ENCODE measurements at regions of chr1 and their contacts with region 1.

Region 1: GRCh38 chr1:217605068-217605789 is 25.7 kb downstream of the GPATCH2 start:
- DNase-seq: no peak
- ATAC-seq: no peak
- H3K4me3 ChIP-seq: no peak overlapping the region
- H3K27ac ChIP-seq: no peak overlapping the region
- H3K4me1 ChIP-seq: no peaks in the 10 kb centered on the region
- H3K27me3 ChIP-seq: no peaks in the 10 kb centered on the region
- CTCF ChIP-seq: no peak

Region 2: DNA sequence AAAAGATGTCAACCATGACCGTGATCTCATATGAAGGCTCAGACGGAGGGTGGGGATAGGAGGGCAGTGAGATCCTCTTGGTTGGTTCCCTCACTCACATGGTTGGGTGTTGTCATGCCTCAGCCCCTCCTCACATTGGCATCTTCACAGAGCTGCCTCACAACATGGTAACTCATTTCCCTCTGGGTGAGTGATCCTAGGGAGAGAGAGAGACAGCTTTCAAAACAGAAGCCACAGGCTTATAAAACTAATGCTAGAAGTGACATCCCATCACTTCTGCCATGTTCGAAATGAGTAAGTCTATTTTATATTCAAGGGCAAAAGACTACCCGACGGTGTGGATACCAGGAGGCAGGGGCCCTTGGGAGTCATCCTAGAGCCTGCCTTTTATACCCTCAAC is 171.5 kb after region 1 on chr1:
- CTCF ChIA-PET with region 1: no interaction called
- POLR2A ChIA-PET with region 1: no interaction called
- intact Hi-C with region 1: loop called (anchors 1 kb)
- DNase-seq: no peak
- ATAC-seq: no peak
- H3K4me3 ChIP-seq: no peak overlapping the region
- H3K27ac ChIP-seq: no peak overlapping the region
- H3K4me1 ChIP-seq: 0 out of 2 replicates have a peak, but pooled peaks cover 5% of the 10 kb centered on the region
- H3K27me3 ChIP-seq: no peaks in the 10 kb centered on the region
- CTCF ChIP-seq: no peak

Measured in PC-3 (cell line).